ENCODE measurements at regions of chr16 and their contacts with region 1.

Region 1: GRCh38 chr16:54912720-54913119 is 17.9 kb upstream of the IRX5 start:
- DNase-seq: no peak
- H3K4me3 ChIP-seq: no peak overlapping the region
- H3K27ac ChIP-seq: no peak overlapping the region
- H3K4me1 ChIP-seq: no peaks in the 10 kb centered on the region
- CTCF ChIP-seq: no peak

Region 2: DNA sequence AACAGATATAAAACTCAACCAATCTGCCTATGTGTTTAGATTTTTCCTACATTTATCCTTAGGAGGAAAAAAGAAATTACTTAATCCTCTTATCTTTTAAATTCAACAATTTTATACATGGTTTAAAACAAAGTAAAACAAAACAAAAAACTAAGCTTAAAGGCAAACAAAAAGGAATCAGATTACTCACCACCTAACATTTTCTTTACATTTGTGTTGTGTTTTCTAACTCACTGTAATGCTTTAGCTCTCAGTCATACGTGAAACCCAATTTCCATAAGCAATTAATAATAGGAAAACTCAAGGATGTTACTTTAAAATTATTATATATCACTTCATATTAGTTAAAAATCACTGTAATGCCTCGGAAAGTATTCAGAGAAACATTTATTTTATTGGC is 11.3 kb after region 1 on chr16:
- CTCF ChIA-PET with region 1: no interaction called
- POLR2A ChIA-PET with region 1: interaction called, 11 read pairs
- intact Hi-C with region 1: no loop called
- DNase-seq: no peak
- H3K4me3 ChIP-seq: no peak overlapping the region
- H3K27ac ChIP-seq: no peak overlapping the region
- H3K4me1 ChIP-seq: peaks cover 54% of the 10 kb centered on the region
- CTCF ChIP-seq: no peak

Measured in OCI-LY7 (cell line).